Aorta (tissue), 5 donors: ENCODE measurements at regions of chr17 and their contacts with region 1.

Region 1: GRCh38 chr17:58112970-58113631 is 29.9 kb downstream of the DYNLL2 start:
- DNase-seq: peak; percentile 77 to 89
- ATAC-seq: peak; percentile 86
- H3K4me3 ChIP-seq: no peak overlapping the region
- H3K27ac ChIP-seq: no peak overlapping the region
- H3K4me1 ChIP-seq: no peaks in the 10 kb centered on the region
- H3K27me3 ChIP-seq: no peaks in the 10 kb centered on the region

Region 2: DNA sequence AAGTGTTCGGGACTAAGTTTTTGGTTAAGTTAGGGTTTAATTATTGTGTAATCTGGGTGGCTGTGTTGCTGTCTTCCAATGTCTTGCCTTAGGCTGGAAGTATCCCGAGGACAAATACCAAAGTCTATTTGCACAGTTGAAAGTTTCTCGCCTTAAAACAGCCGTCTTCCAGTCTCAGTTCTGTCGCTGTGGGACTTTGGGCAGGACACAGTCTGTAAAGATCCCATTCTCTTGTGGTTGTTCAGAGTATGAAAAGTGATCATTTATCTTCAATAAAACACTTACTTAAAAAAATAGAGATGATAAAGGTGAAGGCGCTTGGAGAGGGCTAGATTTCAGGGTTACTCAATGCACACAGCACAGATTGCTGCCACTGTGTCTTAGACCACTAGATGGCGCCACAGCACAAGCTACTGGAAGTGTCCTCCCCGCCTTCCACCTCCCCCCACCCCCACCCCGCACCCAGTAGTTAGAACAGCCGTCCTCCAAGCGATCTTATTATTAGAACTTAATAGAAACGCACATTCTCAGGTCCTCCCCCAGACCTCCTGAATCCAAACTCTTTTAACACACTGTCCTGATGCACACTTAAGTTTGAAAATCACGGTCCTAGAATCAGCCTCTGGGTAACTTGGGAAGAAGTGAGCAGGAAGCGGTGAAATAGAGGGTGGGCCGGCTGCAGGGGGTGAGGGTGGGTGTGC is 982.2 kb before region 1 on chr17:
- intact Hi-C with region 1: loop called in 1 of 2 experiments (anchors 10 kb)
- DNase-seq: peak; percentile 85 to 91
- ATAC-seq: peak; percentile 89
- H3K4me3 ChIP-seq: no peak overlapping the region
- H3K27ac ChIP-seq: no peak overlapping the region
- H3K4me1 ChIP-seq: no peaks in the 10 kb centered on the region
- H3K27me3 ChIP-seq: no peaks in the 10 kb centered on the region

Region 3: DNA sequence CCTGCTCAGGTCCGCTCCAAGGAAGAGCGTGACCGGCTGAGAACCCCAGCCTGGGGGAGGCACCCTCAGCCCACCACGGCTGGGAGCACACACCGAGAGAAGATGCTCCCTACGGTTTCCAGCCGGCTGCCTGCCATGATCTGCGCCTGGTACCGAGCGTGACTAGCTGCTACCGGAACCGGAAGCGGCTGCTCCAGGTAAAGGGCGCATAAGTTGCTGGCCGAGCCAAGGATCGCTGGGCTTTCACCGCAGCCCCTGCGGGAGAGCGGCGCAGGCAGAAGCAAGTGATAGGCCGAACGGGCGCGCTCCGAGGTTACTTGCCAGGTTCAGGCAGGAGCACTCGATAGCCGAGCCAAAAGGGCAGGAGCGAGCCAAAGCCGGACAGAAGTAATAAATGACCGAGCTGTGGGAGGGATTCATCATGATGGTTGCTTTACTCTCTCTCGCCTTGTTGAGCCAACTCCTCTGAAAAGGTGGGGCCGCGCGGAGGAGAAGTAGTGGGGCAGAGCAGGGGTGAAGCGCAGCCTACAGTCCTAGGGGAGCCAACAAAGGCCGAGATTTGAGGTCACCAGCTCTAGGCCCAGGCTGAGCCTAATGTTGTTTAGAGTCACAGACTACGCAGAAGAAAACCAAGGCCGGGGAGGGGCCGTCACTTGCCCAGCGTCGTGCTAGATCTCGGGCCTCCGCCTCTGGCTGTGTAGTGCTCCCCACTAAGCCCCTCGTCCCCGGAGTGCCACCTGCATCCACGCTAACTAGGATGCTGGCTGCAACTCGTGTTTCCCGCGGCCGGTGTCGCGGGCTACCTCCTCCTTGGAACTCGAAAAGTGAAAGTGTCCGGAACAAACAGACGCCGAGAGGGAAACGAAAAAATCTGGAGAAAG is 263.0 kb before region 1 on chr17 and contains the start of gene MRPS23:
- intact Hi-C with region 1: loop called (anchors 5 kb)
- DNase-seq: peak; percentile 99
- ATAC-seq: peak; percentile 98
- H3K4me3 ChIP-seq: peak within 1 kb of the TSS; percentile 73 to 79
- H3K27ac ChIP-seq: peak within 1 kb of the TSS; percentile 76 to 90
- H3K4me1 ChIP-seq: peaks cover 2 to 9% of the 10 kb centered on the region in 2 donors
- H3K27me3 ChIP-seq: no peaks in the 10 kb centered on the region
- total RNA-seq, gene MRPS23: 21.6 to 22.8 TPM

Region 4: DNA sequence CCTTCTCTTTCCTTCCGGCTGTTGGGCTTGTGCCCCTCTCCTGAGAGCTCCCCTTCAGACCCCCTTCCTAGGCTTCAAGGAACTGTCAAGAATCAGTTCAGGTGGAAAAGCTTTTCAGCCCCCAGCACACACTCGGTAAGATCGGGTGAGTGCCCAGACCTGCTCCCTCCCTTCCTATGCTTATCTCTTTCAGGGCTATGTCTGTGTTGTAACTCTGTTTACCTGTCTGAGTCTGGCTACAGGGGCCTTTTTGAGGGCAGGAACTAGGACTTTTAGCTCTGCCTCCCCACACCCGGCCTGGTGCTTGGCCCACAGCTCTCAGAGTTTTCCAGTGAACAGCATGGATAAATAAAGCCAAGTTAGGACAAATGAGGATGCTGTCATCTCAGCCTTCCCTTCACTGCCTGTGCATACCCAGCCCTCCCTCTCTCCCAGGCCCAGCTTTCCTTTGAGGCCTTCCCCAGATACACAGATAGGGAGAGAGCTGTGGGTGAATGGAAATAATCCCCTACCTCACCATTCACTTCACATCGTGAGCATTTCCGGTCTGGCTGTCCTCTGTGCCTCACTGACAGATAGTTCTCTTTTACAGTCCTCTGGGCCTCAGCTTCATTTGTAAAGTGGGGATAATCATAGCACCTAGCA is 257.6 kb before region 1 on chr17:
- intact Hi-C with region 1: loop called (anchors 5 kb)
- DNase-seq: peak in 1 of 2 donors; percentile 35
- ATAC-seq: no peak
- H3K4me3 ChIP-seq: no peak overlapping the region
- H3K27ac ChIP-seq: no peak overlapping the region
- H3K4me1 ChIP-seq: peaks cover 2 to 9% of the 10 kb centered on the region in 2 donors
- H3K27me3 ChIP-seq: no peaks in the 10 kb centered on the region

Region 5: GRCh38 chr17:58006924-58007780 is 105.9 kb before region 1 on chr17 and contains the start of gene SRSF1:
- intact Hi-C with region 1: loop called (anchors 10 kb)
- DNase-seq: peak; percentile 99
- ATAC-seq: peak; percentile 99
- H3K4me3 ChIP-seq: peak within 1 kb of the TSS; percentile 83 to 90
- H3K27ac ChIP-seq: peak within 1 kb of the TSS; percentile 58 to 94
- H3K4me1 ChIP-seq: peaks cover 0 to 7% of the 10 kb centered on the region in 2 donors
- H3K27me3 ChIP-seq: no peaks in the 10 kb centered on the region
- total RNA-seq, gene SRSF1: 138 to 147 TPM

Region 6: GRCh38 chr17:58019039-58019438 is 94.1 kb before region 1 on chr17:
- intact Hi-C with region 1: loop called in 1 of 2 experiments (anchors 10 kb)
- DNase-seq: no peak
- ATAC-seq: no peak
- H3K4me3 ChIP-seq: no peak overlapping the region
- H3K27ac ChIP-seq: no peak overlapping the region
- H3K4me1 ChIP-seq: no peaks in the 10 kb centered on the region
- H3K27me3 ChIP-seq: no peaks in the 10 kb centered on the region